Right lobe of liver (tissue), 6 donors: ENCODE measurements at regions of chr7 and their contacts with region 1.

Region 1: DNA sequence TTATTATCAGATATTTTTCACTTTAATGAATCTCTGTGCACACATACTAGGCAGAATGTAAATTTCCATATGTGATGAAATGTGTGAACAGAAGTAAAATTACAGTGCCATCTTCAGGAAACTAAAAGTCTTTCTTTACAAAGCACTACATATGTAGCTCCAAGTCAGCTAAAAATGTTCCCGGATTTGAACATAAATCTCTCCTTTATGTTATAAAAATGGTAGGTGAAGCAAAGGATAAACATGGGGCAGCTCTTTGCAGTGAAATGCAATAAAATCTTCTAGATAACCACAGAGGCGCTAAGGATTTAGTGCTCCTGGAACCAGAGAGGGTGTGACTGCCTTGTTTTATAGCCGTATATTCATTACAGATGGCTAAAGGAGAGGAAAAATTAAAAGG is 104.9 kb upstream of the C7orf33 start:
- DNase-seq: no peak
- ATAC-seq: peak in 1 of 4 donors; percentile 19
- H3K4me3 ChIP-seq: no peak overlapping the region
- H3K27ac ChIP-seq: no peak overlapping the region
- H3K4me1 ChIP-seq: peaks cover 0 to 19% (median 4%) of the 10 kb centered on the region in 4 donors
- H3K27me3 ChIP-seq: no peaks in the 10 kb centered on the region
- CTCF ChIP-seq: peak; percentile 34 to 43 (median 36)
- POLR2A ChIP-seq: no peak

Region 2: GRCh38 chr7:148262721-148263229 is 222.8 kb before region 1 on chr7:
- intact Hi-C with region 1: loop called in 1 of 2 experiments (anchors 10 kb)
- DNase-seq: peak; percentile 54 to 68 (median 59)
- ATAC-seq: peak; percentile 93 to 96 (median 94)
- H3K4me3 ChIP-seq: no peak overlapping the region
- H3K27ac ChIP-seq: no peak overlapping the region
- H3K4me1 ChIP-seq: peaks cover 0 to 6% (median 0%) of the 10 kb centered on the region in 4 donors
- H3K27me3 ChIP-seq: no peaks in the 10 kb centered on the region
- CTCF ChIP-seq: peak; percentile 78 to 96 (median 94)
- POLR2A ChIP-seq: no peak

Region 3: DNA sequence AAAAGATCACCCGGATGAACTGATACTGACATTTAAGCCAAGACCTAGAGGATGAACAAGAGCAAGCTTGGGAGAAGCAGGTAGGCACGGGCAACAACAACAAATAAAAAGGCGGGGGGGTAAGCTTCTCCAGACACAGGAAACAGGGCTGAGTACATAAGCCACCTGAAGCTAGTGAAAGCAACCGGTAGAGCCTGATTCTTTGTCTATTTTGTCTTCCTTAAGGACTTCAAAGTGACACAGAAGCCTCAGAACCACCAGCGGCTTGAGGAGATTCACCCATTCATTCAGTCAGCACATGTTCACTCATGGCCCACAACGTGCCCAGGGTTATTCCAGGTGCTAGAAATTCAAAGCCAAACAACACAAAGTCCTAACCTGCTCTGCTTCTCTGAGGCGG is 35.6 kb after region 1 on chr7:
- intact Hi-C with region 1: no loop called
- DNase-seq: no peak
- ATAC-seq: no peak
- H3K4me3 ChIP-seq: no peak overlapping the region
- H3K27ac ChIP-seq: no peak overlapping the region
- H3K4me1 ChIP-seq: no peaks in the 10 kb centered on the region
- H3K27me3 ChIP-seq: no peaks in the 10 kb centered on the region
- CTCF ChIP-seq: no peak
- POLR2A ChIP-seq: no peak

Region 4: GRCh38 chr7:148570510-148570909 is 84.9 kb after region 1 on chr7:
- intact Hi-C with region 1: no loop called
- DNase-seq: no peak
- ATAC-seq: no peak
- H3K4me3 ChIP-seq: no peak overlapping the region
- H3K27ac ChIP-seq: no peak overlapping the region
- H3K4me1 ChIP-seq: peaks cover 0 to 10% (median 2%) of the 10 kb centered on the region in 4 donors
- H3K27me3 ChIP-seq: no peaks in the 10 kb centered on the region
- CTCF ChIP-seq: no peak
- POLR2A ChIP-seq: no peak